ENCODE measurements at regions of chr12 and their contacts with region 1.

Region 1: GRCh38 chr12:751192-751998 is 984 bp upstream of the WNK1 start:
- DNase-seq: peak; percentile 93
- H3K4me3 ChIP-seq: peak overlapping the region; percentile 92
- H3K27ac ChIP-seq: peak overlapping the region; percentile 99
- H3K4me1 ChIP-seq: peaks cover 61% of the 10 kb centered on the region
- H3K27me3 ChIP-seq: no peaks in the 10 kb centered on the region
- CTCF ChIP-seq: peak; percentile 83

Region 2: GRCh38 chr12:575948-576612 is 175.3 kb before region 1 on chr12:
- intact Hi-C with region 1: loop called (anchors 5 kb)
- DNase-seq: peak; percentile 84
- H3K4me3 ChIP-seq: peak overlapping the region; percentile 19
- H3K27ac ChIP-seq: peak overlapping the region; percentile 97
- H3K4me1 ChIP-seq: peaks cover 92% of the 10 kb centered on the region
- H3K27me3 ChIP-seq: no peaks in the 10 kb centered on the region
- CTCF ChIP-seq: peak; percentile 99

Region 3: GRCh38 chr12:642633-643474 is 108.5 kb before region 1 on chr12:
- intact Hi-C with region 1: loop called (anchors 10 kb)
- DNase-seq: peak; percentile 82
- H3K4me3 ChIP-seq: peak overlapping the region; percentile 79
- H3K27ac ChIP-seq: peak overlapping the region; percentile 100
- H3K4me1 ChIP-seq: peaks cover 63% of the 10 kb centered on the region
- H3K27me3 ChIP-seq: no peaks in the 10 kb centered on the region
- CTCF ChIP-seq: peak; percentile 54

Region 4: GRCh38 chr12:810671-811415 is 59.4 kb after region 1 on chr12:
- intact Hi-C with region 1: loop called (anchors 5 kb)
- DNase-seq: no peak
- H3K4me3 ChIP-seq: no peak overlapping the region
- H3K27ac ChIP-seq: no peak overlapping the region
- H3K4me1 ChIP-seq: peaks cover 91% of the 10 kb centered on the region
- H3K27me3 ChIP-seq: no peaks in the 10 kb centered on the region
- CTCF ChIP-seq: no peak

Region 5: DNA sequence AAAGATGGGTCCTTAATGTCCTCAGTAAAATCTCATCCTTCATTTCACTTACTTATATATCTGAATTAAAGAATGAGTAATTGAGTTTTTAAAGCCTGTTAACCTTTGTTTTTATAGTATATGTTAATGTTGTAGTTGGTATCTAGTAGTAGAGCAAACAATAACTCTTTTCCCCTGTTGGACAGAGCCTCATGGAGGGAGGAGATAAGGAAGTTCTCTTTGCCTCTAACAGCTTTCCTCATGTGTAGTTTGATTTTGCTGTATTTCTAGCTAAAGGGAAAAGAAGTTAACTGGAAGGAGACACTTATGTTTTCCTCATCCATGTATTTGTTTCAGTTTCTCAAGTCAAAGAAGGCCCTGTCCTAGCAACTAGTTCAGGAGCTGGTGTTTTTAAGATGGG is 142.8 kb after region 1 on chr12:
- intact Hi-C with region 1: no loop called
- DNase-seq: no peak
- H3K4me3 ChIP-seq: no peak overlapping the region
- H3K27ac ChIP-seq: no peak overlapping the region
- H3K4me1 ChIP-seq: no peaks in the 10 kb centered on the region
- H3K27me3 ChIP-seq: no peaks in the 10 kb centered on the region
- CTCF ChIP-seq: no peak

Measured in left ventricle myocardium inferior (tissue), 1 donor.